ENCODE measurements at regions of chr19 and their contacts with region 1.

Region 1: DNA sequence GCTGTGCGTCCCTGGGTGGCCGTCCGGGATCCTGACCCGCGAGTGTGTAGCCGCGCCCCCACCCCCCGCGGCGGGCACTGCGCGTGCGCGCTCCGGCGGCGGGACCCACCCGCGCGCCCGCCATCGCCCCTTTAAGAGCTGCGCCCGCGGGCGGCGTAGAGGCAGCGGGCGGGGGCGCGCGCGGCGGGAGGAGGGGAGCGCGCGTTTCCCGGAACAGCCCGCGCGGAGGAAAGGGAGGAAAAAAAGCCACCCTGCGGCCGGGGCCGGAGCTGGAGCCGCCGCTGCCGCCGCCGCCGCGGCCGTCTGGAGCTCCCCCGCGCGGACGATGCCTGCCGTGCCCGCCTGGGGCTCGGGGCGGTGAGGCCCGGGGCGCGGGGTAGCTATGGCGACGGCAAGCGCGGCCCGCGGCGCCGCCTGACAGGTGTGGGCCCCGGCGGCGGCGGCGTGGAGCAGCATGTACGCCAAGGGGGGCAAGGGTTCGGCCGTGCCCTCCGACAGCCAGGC is at the start of gene SSBP4:
- DNase-seq: peak in 1 of 2 experiments; percentile 87
- H3K4me3 ChIP-seq: peak within 1 kb of the TSS; percentile 33 to 63 (median 46)
- H3K27ac ChIP-seq: no peak within 1 kb of the TSS
- H3K4me1 ChIP-seq: peaks cover 0 to 39% (median 25%) of the 10 kb centered on the region in 4 experiments; a peak in 6 of 7 replicates
- H3K27me3 ChIP-seq: peaks cover 5 to 29% (median 23%) of the 10 kb centered on the region in 4 experiments
- CTCF ChIP-seq: peak; percentile 32 to 80 (median 39)
- EP300 ChIP-seq: peak; percentile 62 to 98; a peak in 2 of 3 replicates
- POLR2A ChIP-seq: no peak
- RAD21 ChIP-seq: peak in 1 of 2 experiments; percentile 37; a peak in 2 of 4 replicates
- total RNA-seq, gene SSBP4: 26.4 and 30.5 TPM in 2 replicates

Region 2: GRCh38 chr19:18291590-18292461 is 127.4 kb before region 1 on chr19:
- CTCF ChIA-PET with region 1: no interaction called
- POLR2A ChIA-PET with region 1: interaction called, 13 read pairs
- DNase-seq: peak in 1 of 2 experiments; percentile 88
- H3K4me3 ChIP-seq: peak overlapping the region; percentile 55 to 75 (median 66)
- H3K27ac ChIP-seq: peak overlapping the region; percentile 81
- H3K4me1 ChIP-seq: peaks cover 4 to 35% (median 27%) of the 10 kb centered on the region in 4 experiments
- H3K27me3 ChIP-seq: peaks cover 0 to 5% (median 0%) of the 10 kb centered on the region in 4 experiments; a peak in 2 of 7 replicates
- CTCF ChIP-seq: no peak
- EP300 ChIP-seq: no peak
- POLR2A ChIP-seq: no peak; a peak in 1 of 3 replicates
- RAD21 ChIP-seq: no peak

Region 3: DNA sequence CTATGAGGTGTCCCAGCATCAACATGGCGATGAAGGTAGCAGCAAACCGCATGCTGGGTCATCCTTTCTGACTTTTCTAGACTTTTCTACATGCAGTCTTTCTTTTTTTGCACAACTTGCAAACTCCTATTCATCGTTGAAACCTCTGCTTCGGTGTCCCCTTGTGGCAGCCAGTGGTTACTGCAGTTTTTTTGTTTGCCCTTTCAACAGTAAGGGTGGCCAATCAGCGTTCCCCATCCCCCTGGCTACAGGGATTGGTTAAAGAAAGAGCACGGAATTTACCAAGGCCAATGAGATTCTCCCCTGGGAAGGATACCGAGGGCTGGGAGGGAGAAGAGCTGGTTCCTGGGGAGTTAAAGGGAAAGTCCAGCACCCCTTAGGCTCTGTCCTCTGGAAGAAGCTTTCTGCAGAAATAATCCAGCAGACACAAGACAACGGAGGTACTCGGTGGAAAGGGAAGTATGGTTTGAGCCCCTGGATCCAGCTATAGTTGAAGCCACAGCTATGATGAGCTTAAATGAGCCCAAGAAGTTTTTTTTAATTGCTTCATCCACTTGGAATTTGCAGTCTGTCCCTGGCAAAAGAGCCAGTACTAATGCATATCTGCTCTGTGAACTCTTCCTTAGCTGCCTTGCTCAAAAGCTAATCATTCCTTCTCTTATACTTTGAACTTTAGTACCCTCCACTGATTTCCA is 90.8 kb before region 1 on chr19:
- CTCF ChIA-PET with region 1: interaction called, 45 read pairs
- POLR2A ChIA-PET with region 1: interaction called, 3 read pairs
- DNase-seq: peak; percentile 87
- H3K4me3 ChIP-seq: peak overlapping the region; percentile 28 to 53 (median 38); a peak in 6 of 8 replicates
- H3K27ac ChIP-seq: no peak overlapping the region; the same call in 1 of the 2 replicates
- H3K4me1 ChIP-seq: peaks cover 0 to 7% (median 4%) of the 10 kb centered on the region in 4 experiments; a peak in 5 of 7 replicates
- H3K27me3 ChIP-seq: no peaks in the 10 kb centered on the region
- CTCF ChIP-seq: peak; percentile 45 to 82 (median 69)
- EP300 ChIP-seq: no peak
- POLR2A ChIP-seq: 0 out of 3 replicates have a peak, but pooled peaks of 1 of the 2 experiments have one; percentile 49
- RAD21 ChIP-seq: peak; percentile 60 to 72

Region 4: GRCh38 chr19:18349524-18350128 is 69.6 kb before region 1 on chr19:
- CTCF ChIA-PET with region 1: interaction called, 132 read pairs
- POLR2A ChIA-PET with region 1: interaction called, 6 read pairs
- DNase-seq: peak in 1 of 2 experiments; percentile 75
- H3K4me3 ChIP-seq: no peak overlapping the region
- H3K27ac ChIP-seq: no peak overlapping the region
- H3K4me1 ChIP-seq: peaks cover 0 to 3% (median 2%) of the 10 kb centered on the region in 4 experiments; a peak in 4 of 7 replicates
- H3K27me3 ChIP-seq: no peaks in the 10 kb centered on the region
- CTCF ChIP-seq: peak; percentile 76 to 87 (median 84)
- EP300 ChIP-seq: no peak
- POLR2A ChIP-seq: no peak
- RAD21 ChIP-seq: peak; percentile 89 to 91

Region 5: DNA sequence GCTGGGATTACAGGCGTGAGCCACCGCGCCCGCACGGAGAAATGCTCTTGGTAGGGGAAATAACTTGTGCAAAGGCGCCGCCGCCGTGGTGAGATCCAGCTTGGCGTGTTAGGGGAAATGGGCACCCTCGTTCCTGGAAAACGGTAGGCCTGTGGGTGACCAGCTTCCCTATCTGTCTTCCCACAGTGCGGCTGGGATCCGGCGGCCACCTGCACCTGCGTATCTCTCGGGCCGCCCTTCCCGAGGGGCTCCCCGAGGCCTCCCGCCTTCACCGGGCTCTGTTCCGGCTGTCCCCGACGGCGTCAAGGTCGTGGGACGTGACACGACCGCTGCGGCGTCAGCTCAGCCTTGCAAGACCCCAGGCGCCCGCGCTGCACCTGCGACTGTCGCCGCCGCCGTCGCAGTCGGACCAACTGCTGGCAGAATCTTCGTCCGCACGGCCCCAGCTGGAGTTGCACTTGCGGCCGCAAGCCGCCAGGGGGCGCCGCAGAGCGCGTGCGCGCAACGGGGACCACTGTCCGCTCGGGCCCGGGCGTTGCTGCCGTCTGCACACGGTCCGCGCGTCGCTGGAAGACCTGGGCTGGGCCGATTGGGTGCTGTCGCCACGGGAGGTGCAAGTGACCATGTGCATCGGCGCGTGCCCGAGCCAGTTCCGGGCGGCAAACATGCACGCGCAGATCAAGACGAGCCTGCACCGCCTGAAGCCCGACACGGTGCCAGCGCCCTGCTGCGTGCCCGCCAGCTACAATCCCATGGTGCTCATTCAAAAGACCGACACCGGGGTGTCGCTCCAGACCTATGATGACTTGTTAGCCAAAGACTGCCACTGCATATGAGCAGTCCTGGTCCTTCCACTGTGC is 30.9 kb before region 1 on chr19:
- CTCF ChIA-PET with region 1: interaction called, 177 read pairs
- POLR2A ChIA-PET with region 1: interaction called, 3 read pairs
- DNase-seq: peak in 1 of 2 experiments; percentile 98
- H3K4me3 ChIP-seq: peak overlapping the region in 3 of 4 experiments; percentile 17 to 46 (median 20); a peak in 5 of 8 replicates
- H3K27ac ChIP-seq: no peak overlapping the region
- H3K4me1 ChIP-seq: peaks cover 3 to 4% (median 3%) of the 10 kb centered on the region in 4 experiments
- H3K27me3 ChIP-seq: peaks cover 0 to 23% (median 14%) of the 10 kb centered on the region in 4 experiments; a peak in 6 of 7 replicates
- CTCF ChIP-seq: peak; percentile 97 to 99 (median 98)
- EP300 ChIP-seq: no peak
- POLR2A ChIP-seq: no peak
- RAD21 ChIP-seq: peak; percentile 52 to 73; a peak in 3 of 4 replicates

Region 6: GRCh38 chr19:18408053-18408476 is 11.2 kb before region 1 on chr19:
- CTCF ChIA-PET with region 1: interaction called, 79 read pairs
- POLR2A ChIA-PET with region 1: interaction called, 3 read pairs
- DNase-seq: peak in 1 of 2 experiments; percentile 86
- H3K4me3 ChIP-seq: no peak overlapping the region
- H3K27ac ChIP-seq: no peak overlapping the region
- H3K4me1 ChIP-seq: no peaks in the 10 kb centered on the region
- H3K27me3 ChIP-seq: no peaks in the 10 kb centered on the region
- CTCF ChIP-seq: peak; percentile 63 to 82 (median 72)
- EP300 ChIP-seq: no peak
- POLR2A ChIP-seq: no peak
- RAD21 ChIP-seq: peak; percentile 62 to 69

Region 7: DNA sequence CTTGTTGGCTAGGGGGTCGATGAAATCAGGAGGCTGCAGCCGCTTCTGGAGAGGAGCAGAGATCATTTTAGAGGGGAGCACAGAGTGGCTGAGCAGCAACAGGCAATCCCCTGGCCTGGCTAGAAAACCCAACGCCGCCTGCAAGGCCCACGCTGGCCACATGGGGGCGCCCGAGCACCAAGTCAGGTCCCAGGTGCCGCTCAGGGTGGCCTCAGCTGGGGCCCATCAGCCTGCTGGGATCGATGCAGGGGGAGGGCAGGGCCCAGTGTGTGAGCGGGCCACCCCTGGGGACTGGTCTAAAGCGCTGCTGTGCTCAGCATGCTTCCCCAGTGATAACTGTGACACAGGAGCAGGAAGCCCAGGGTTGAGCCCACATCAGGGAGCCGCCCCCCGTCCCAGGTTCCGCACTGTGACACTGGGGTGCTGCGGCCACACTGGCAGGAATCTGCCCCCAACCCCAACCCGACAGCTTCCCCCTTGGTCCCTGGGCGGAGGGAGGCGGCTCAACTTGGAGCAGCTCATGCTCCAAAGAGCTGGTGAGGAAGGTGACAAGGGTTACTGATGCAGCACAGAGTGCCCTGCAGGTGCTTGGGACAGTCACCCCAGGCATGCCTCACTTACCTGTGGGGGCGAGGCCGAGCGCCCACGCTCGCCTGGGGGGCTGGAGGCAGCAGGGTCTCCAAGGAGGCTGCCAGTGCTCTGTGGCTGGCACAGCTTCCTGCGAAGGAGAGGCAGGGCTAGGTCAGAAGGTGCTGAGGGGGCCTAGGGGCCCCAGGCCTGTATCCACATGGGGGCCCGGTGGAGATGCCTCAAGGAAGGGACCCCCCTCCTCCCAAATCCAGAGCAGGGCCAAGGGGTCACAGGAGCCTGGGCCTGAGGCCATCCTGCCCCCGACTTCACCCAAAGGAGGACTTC is 31.9 kb after region 1 on chr19:
- CTCF ChIA-PET with region 1: interaction called, 13 read pairs
- POLR2A ChIA-PET with region 1: interaction called, 3 read pairs
- DNase-seq: peak in 1 of 2 experiments; percentile 100
- H3K4me3 ChIP-seq: no peak overlapping the region
- H3K27ac ChIP-seq: no peak overlapping the region
- H3K4me1 ChIP-seq: no peaks in the 10 kb centered on the region; a peak in 3 of 7 replicates
- H3K27me3 ChIP-seq: no peaks in the 10 kb centered on the region
- CTCF ChIP-seq: peak; percentile 93 to 98 (median 95)
- EP300 ChIP-seq: no peak
- POLR2A ChIP-seq: no peak
- RAD21 ChIP-seq: peak; percentile 83 to 88

Measured in H1 (cell line).